ENCODE measurements at regions of chr19 and their contacts with region 1.

Region 1: GRCh38 chr19:5953680-5954213 is 24.2 kb downstream of the RANBP3 start:
- DNase-seq: peak; percentile 56
- H3K4me3 Mint-ChIP-seq: peak overlapping the region; percentile 53
- H3K27ac Mint-ChIP-seq: peak overlapping the region; percentile 92
- H3K4me1 Mint-ChIP-seq: peaks cover 88% of the 10 kb centered on the region
- H3K27me3 Mint-ChIP-seq: no peaks in the 10 kb centered on the region

Region 2: DNA sequence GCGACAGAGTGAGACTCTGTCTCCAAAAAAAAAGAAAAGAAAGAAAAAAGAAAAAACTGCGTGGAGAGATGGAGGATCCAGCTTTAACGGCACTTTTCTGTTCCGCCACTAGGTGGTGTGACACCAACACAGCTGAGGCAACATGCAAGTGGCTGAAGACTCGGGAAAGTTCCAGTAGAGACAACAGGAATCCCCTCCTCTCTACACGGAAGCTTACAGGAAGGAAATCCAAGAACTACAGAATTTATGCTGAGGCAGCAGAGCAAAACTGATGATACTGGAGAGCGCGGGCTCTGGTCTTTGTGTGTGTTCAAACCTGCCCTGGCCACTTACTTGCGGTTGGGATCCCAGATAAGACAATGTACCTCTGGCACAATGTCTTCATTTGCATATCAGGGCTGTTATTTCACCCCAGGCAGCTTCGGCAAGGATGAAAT is 14.3 kb after region 1 on chr19:
- CTCF ChIA-PET with region 1: interaction called, 17 read pairs
- POLR2A ChIA-PET with region 1: no interaction called
- DNase-seq: peak; percentile 74
- H3K4me3 Mint-ChIP-seq: no peak overlapping the region
- H3K27ac Mint-ChIP-seq: no peak overlapping the region
- H3K4me1 Mint-ChIP-seq: peaks cover 84% of the 10 kb centered on the region
- H3K27me3 Mint-ChIP-seq: no peaks in the 10 kb centered on the region

Measured in activated CD4-positive, alpha-beta T cell treated with anti-CD3 and anti-CD28 coated beads, Interleukin-2, amount 10 ng/mL, durations not matched to agents 7 days and 5 days (primary cell).